Activated CD4-positive, alpha-beta memory T cell treated with anti-CD3 and anti-CD28 coated beads, Interleukin-2, amount 10 ng/mL, durations not matched to agents 7 days and 5 days (primary cell): ENCODE measurements at regions of chr4 and their contacts with region 1.

Region 1: GRCh38 chr4:42519803-42520417 is 122.6 kb downstream of the SHISA3 start:
- DNase-seq: peak; percentile 37
- H3K4me3 Mint-ChIP-seq: no peak overlapping the region
- H3K27ac Mint-ChIP-seq: no peak overlapping the region
- H3K4me1 Mint-ChIP-seq: no peaks in the 10 kb centered on the region
- H3K27me3 Mint-ChIP-seq: no peaks in the 10 kb centered on the region

Region 2: DNA sequence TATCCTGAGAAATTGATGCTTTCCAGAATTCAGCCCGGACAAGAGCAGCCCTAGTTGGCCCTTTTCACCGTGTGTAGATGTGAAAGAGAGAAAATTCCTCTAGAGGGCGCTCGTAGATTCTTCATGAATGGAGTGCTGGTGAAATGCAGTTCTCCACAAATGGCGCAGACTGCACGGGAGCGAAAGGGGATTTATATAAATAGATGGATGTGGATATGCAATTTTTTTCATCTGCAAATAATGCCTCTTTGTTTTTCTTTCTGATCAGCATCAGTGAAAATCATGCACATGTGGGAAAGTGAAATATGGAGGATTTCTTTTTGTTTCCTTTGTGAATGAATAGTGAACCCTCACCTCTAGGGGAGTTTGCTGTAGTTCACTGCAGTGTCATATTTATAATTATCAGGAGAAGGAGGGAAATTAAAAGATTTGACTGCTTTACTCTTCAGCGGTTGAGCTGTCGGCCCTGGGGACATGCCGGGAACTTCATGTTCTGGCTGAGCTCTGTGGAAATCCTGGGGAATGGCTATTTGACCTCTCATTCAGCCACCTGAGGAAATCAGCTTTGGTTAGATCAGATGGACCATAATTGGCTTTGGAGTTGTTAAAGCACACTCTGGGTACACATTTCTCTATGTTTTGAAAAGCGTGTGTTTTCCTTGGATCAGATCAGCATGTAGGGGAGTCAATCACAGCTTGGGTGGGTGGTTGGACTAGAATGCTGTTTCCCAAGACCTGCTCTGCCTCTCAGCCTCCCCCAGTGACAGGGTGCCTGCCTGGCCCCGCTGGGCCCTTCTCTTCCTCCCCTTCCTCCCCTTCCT is 237.6 kb before region 1 on chr4:
- CTCF ChIA-PET with region 1: interaction called, 70 read pairs
- POLR2A ChIA-PET with region 1: no interaction called
- DNase-seq: peak; percentile 27
- H3K4me3 Mint-ChIP-seq: no peak overlapping the region
- H3K27ac Mint-ChIP-seq: no peak overlapping the region
- H3K4me1 Mint-ChIP-seq: peaks cover 7% of the 10 kb centered on the region
- H3K27me3 Mint-ChIP-seq: peaks cover 2% of the 10 kb centered on the region

Region 3: DNA sequence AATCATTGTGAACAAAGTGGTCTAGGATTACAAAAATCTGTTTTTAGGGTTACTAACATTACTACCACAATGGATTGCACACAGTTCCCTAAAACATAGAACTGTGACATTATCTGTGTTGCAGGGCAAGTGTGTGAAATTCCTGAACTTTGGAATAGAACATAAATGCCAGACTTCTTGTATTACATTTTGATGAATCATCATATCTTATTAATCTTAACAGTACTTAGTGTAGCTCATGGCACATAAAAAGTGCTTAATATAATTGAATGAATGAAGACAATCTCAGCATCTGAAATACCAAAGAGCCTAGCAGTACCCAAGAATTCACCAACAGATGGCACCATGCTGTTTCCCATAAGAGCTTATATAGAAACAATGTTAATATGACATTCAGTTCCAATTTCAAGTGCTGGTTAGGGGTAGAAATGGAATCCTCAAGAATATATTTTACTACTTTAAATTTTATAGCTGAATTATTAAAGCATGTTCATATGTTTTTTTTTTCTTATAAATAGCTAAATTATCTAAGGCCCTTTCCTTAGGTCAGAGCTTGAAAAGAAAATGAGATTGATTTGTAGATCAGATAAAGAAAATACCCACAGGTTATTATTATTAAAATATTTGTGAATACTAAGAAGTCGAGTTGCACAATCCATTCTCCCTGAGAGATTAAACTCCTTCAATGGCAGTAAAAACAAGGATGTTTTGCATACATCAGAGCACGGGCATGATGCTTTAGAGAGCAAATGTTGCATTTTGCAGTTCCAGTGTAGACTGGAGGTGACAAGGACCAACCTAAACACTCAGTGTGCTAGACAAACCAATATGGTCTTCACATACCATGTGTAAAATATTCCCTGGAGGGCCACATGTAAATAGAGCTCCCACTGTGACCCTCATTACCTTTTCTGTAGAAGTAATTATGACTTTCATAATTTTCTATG is 148.3 kb before region 1 on chr4:
- CTCF ChIA-PET with region 1: interaction called, 56 read pairs
- POLR2A ChIA-PET with region 1: no interaction called
- DNase-seq: no peak
- H3K4me3 Mint-ChIP-seq: no peak overlapping the region
- H3K27ac Mint-ChIP-seq: no peak overlapping the region
- H3K4me1 Mint-ChIP-seq: no peaks in the 10 kb centered on the region
- H3K27me3 Mint-ChIP-seq: peaks cover 8% of the 10 kb centered on the region